ENCODE measurements at regions of chr7 and their contacts with region 1.

Region 1: GRCh38 chr7:25894902-25895791 is 256.9 kb upstream of the NFE2L3 start:
- DNase-seq: peak; percentile 75
- ATAC-seq: peak; percentile 52
- H3K4me3 Mint-ChIP-seq: peak overlapping the region; percentile 81
- H3K27ac Mint-ChIP-seq: 0 out of 2 replicates have a peak overlapping the region, but pooled peaks have one; percentile 33
- H3K4me1 Mint-ChIP-seq: peaks cover 30% of the 10 kb centered on the region
- H3K27me3 Mint-ChIP-seq: peaks cover 3% of the 10 kb centered on the region; the same call in 1 of the 2 replicates
- CTCF ChIP-seq: peak; percentile 62; the same call in 1 of the 2 replicates

Region 2: GRCh38 chr7:25456467-25457171 is 438.5 kb before region 1 on chr7:
- CTCF ChIA-PET with region 1: no interaction called
- POLR2A ChIA-PET with region 1: no interaction called
- DNase-seq: peak; percentile 13
- ATAC-seq: no peak
- H3K4me3 Mint-ChIP-seq: no peak overlapping the region
- H3K27ac Mint-ChIP-seq: no peak overlapping the region
- H3K4me1 Mint-ChIP-seq: peaks cover 19% of the 10 kb centered on the region
- H3K27me3 Mint-ChIP-seq: peaks cover 2% of the 10 kb centered on the region; the same call in 1 of the 2 replicates
- CTCF ChIP-seq: no peak

Region 3: GRCh38 chr7:25481891-25482290 is 413.3 kb before region 1 on chr7:
- CTCF ChIA-PET with region 1: no interaction called
- POLR2A ChIA-PET with region 1: no interaction called
- DNase-seq: no peak
- ATAC-seq: no peak
- H3K4me3 Mint-ChIP-seq: no peak overlapping the region
- H3K27ac Mint-ChIP-seq: no peak overlapping the region
- H3K4me1 Mint-ChIP-seq: peaks cover 7% of the 10 kb centered on the region
- H3K27me3 Mint-ChIP-seq: no peaks in the 10 kb centered on the region
- CTCF ChIP-seq: no peak

Region 4: DNA sequence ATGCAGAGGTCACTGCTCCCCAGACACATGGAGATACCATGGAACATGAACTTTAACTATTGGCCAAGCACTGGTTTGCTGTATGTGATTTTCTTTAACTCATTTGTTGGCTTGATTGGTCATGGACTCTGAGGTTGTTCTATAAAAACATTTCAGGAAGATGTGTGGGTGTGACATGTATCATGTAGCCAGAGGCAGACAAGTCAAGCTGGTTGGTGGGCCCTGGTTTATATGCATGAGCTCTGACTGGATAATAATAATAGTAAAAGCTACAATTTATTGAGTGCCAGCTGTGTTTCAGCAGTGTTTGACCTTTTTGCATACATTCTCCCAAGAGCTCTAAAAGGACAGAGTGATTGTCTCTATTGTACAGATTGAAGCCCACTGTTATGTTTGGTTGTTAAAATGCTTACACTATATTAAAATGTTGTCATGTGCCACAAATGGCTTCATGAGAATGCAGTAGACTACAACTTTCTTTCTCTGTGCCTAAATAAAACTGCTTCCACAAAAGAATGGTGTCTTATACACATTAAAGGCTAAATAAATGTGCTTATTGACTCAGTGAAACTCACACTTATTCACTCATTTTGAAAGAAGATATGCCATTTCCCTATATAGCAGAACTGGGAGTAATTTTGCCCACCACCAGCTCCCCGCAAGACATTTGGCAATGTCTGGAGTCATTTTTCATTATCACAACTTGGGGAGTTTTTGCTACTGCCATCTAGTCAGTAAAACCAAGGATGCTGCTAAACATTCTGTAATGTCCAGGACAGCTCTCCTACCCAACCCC is 13.2 kb after region 1 on chr7:
- CTCF ChIA-PET with region 1: interaction called, 43 read pairs
- POLR2A ChIA-PET with region 1: no interaction called
- DNase-seq: no peak
- ATAC-seq: no peak
- H3K4me3 Mint-ChIP-seq: no peak overlapping the region
- H3K27ac Mint-ChIP-seq: no peak overlapping the region
- H3K4me1 Mint-ChIP-seq: peaks cover 29% of the 10 kb centered on the region
- H3K27me3 Mint-ChIP-seq: no peaks in the 10 kb centered on the region
- CTCF ChIP-seq: no peak

Region 5: GRCh38 chr7:25933921-25934320 is 38.8 kb after region 1 on chr7:
- CTCF ChIA-PET with region 1: no interaction called
- POLR2A ChIA-PET with region 1: no interaction called
- DNase-seq: no peak
- ATAC-seq: no peak
- H3K4me3 Mint-ChIP-seq: no peak overlapping the region
- H3K27ac Mint-ChIP-seq: no peak overlapping the region
- H3K4me1 Mint-ChIP-seq: peaks cover 3% of the 10 kb centered on the region; the same call in 1 of the 2 replicates
- H3K27me3 Mint-ChIP-seq: peaks cover 8% of the 10 kb centered on the region; the same call in 1 of the 2 replicates
- CTCF ChIP-seq: no peak

Region 6: GRCh38 chr7:25982684-25983083 is 87.5 kb after region 1 on chr7:
- CTCF ChIA-PET with region 1: no interaction called
- POLR2A ChIA-PET with region 1: no interaction called
- DNase-seq: no peak
- ATAC-seq: no peak
- H3K4me3 Mint-ChIP-seq: no peak overlapping the region
- H3K27ac Mint-ChIP-seq: no peak overlapping the region
- H3K4me1 Mint-ChIP-seq: peaks cover 8% of the 10 kb centered on the region
- H3K27me3 Mint-ChIP-seq: no peaks in the 10 kb centered on the region; the same call in 1 of the 2 replicates
- CTCF ChIP-seq: no peak

Region 7: DNA sequence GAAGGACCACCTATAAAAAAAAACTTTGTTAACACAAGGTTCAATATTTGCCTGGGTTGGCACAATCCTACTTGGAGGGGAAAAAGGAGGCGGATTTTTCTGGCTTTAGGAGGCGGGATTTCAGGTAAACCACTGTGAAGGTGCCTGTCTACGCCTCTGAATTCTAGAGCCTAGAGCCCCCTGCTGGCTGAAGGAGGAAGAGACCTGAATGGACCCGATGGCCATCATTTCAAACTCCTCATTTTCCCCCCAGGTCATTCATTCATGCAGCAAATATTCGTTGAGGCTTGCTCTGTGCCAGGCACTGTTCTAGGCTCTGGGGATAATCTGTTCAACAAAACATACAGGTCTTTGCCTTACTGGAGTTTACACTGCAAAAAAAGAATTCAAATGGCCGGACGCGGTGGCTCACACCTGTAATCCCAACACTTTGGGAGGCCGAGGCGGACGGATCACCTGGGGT is 166.6 kb after region 1 on chr7:
- CTCF ChIA-PET with region 1: interaction called, 12 read pairs
- POLR2A ChIA-PET with region 1: no interaction called
- DNase-seq: peak; percentile 88
- ATAC-seq: peak; percentile 96
- H3K4me3 Mint-ChIP-seq: no peak overlapping the region
- H3K27ac Mint-ChIP-seq: no peak overlapping the region
- H3K4me1 Mint-ChIP-seq: peaks cover 10% of the 10 kb centered on the region
- H3K27me3 Mint-ChIP-seq: no peaks in the 10 kb centered on the region; the same call in 1 of the 2 replicates
- CTCF ChIP-seq: peak; percentile 78

Region 8: GRCh38 chr7:26078437-26079336 is 183.5 kb after region 1 on chr7:
- CTCF ChIA-PET with region 1: interaction called, 12 read pairs
- POLR2A ChIA-PET with region 1: no interaction called
- DNase-seq: peak; percentile 85
- ATAC-seq: peak; percentile 97
- H3K4me3 Mint-ChIP-seq: peak overlapping the region; percentile 20
- H3K27ac Mint-ChIP-seq: no peak overlapping the region
- H3K4me1 Mint-ChIP-seq: peaks cover 33% of the 10 kb centered on the region
- H3K27me3 Mint-ChIP-seq: no peaks in the 10 kb centered on the region; the same call in 1 of the 2 replicates
- CTCF ChIP-seq: no peak

Region 9: GRCh38 chr7:26090927-26091519 is 195.9 kb after region 1 on chr7:
- CTCF ChIA-PET with region 1: interaction called, 16 read pairs
- POLR2A ChIA-PET with region 1: no interaction called
- DNase-seq: no peak
- ATAC-seq: peak; percentile 78
- H3K4me3 Mint-ChIP-seq: peak overlapping the region; percentile 52
- H3K27ac Mint-ChIP-seq: peak overlapping the region; percentile 91
- H3K4me1 Mint-ChIP-seq: peaks cover 21% of the 10 kb centered on the region
- H3K27me3 Mint-ChIP-seq: no peaks in the 10 kb centered on the region
- CTCF ChIP-seq: peak; percentile 26; the same call in 1 of the 2 replicates

Region 10: DNA sequence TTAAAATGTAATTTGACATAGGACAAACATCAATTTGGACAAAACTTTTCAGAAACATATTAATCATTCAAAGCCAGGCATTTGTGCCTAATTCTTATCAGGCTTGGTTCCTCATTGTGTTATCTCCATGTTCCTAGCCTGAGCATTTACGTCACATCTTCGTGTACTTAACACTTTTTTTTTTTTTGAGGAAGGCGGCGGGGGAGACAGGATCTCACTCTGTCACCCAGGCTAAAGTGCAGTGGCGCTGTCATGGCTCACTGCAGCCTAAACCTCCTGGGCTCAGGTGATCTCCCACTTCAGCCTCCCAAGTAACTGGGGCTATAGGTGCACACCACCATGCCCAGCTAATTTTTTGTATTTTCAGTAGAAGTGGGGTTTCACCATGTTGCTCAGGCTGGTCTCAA is 285.6 kb after region 1 on chr7:
- CTCF ChIA-PET with region 1: interaction called, 12 read pairs
- POLR2A ChIA-PET with region 1: no interaction called
- DNase-seq: no peak
- ATAC-seq: no peak
- H3K4me3 Mint-ChIP-seq: no peak overlapping the region
- H3K27ac Mint-ChIP-seq: no peak overlapping the region; the same call in 1 of the 2 replicates
- H3K4me1 Mint-ChIP-seq: peaks cover 33% of the 10 kb centered on the region
- H3K27me3 Mint-ChIP-seq: no peaks in the 10 kb centered on the region
- CTCF ChIP-seq: no peak

Region 11: DNA sequence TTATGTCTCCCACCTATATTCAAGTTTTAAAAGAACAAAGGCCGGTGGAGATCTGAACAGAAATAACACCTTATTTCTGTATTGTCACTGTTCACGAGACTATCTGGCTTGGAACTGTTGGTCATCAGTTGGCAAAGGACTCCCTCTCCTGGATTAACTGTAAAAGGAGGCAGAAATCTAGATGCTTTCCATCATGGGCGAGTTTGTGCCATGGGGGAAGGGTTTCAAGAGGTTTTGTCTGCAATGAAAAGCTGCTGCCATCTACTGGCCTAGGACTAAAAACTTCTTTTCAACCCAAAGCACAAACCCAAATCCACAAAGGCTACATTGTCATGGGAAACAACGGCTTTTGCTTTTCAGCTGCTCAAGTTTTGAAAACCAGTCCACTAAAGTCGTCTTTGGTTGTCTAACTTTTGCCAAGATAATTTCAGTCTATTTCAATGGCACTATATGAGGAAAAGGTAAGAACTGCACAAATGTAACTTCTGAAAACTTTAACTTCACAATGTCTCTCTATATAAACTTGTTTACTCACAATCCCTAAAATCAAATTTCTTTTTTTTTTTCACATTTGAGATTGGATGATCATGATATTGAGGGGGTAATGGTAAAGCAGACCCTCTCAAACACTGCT is 772.5 kb after region 1 on chr7:
- CTCF ChIA-PET with region 1: interaction called, 15 read pairs
- POLR2A ChIA-PET with region 1: no interaction called
- DNase-seq: peak; percentile 68
- ATAC-seq: peak; percentile 97
- H3K4me3 Mint-ChIP-seq: no peak overlapping the region
- H3K27ac Mint-ChIP-seq: no peak overlapping the region
- H3K4me1 Mint-ChIP-seq: peaks cover 14% of the 10 kb centered on the region
- H3K27me3 Mint-ChIP-seq: no peaks in the 10 kb centered on the region
- CTCF ChIP-seq: peak; percentile 43

Measured in WTC11 (cell line).